ENCODE measurements at regions of chr4 and their contacts with region 1.

Region 1: GRCh38 chr4:38730830-38731646 is 51.8 kb downstream of the TLR10 start:
- DNase-seq: peak; percentile 71 to 81 (median 76)
- H3K4me3 ChIP-seq: no peak overlapping the region
- H3K27ac ChIP-seq: no peak overlapping the region
- H3K4me1 ChIP-seq: peaks cover 0 to 8% (median 0%) of the 10 kb centered on the region in 4 experiments
- H3K27me3 ChIP-seq: no peaks in the 10 kb centered on the region

Region 2: GRCh38 chr4:38062088-38062893 is 668.7 kb before region 1 on chr4:
- CTCF ChIA-PET with region 1: interaction called, 47 read pairs
- POLR2A ChIA-PET with region 1: no interaction called
- DNase-seq: peak; percentile 67 to 78 (median 71)
- H3K4me3 ChIP-seq: peak overlapping the region in 5 of 7 experiments; percentile 15 to 75 (median 47)
- H3K27ac ChIP-seq: no peak overlapping the region
- H3K4me1 ChIP-seq: peaks cover 0 to 4% (median 0%) of the 10 kb centered on the region in 4 experiments
- H3K27me3 ChIP-seq: no peaks in the 10 kb centered on the region

Region 3: GRCh38 chr4:38641811-38642210 is 89.2 kb before region 1 on chr4:
- CTCF ChIA-PET with region 1: no interaction called
- POLR2A ChIA-PET with region 1: no interaction called
- DNase-seq: no peak
- H3K4me3 ChIP-seq: no peak overlapping the region
- H3K27ac ChIP-seq: no peak overlapping the region
- H3K4me1 ChIP-seq: peaks cover 0 to under 1% (median 0%) of the 10 kb centered on the region in 4 experiments
- H3K27me3 ChIP-seq: no peaks in the 10 kb centered on the region

Region 4: DNA sequence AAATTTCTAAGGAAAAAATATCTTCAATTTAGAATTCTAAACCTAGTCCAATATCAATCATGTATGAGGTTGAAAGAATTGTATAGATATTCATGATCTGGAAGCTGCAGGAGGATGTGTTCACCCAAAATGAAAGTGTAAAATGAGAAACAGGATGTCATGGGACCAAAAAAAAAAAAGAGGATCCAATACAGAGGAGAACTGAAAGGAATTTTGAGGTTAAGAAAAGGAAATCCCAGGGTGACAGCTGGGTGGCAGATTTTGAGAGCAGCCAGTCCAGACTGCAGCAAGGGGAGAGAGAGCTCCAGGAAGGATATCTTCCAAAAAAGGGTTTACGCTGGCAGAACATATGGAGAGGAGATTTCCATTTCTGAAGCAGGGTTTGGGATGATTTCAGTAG is 12.8 kb after region 1 on chr4:
- CTCF ChIA-PET with region 1: interaction called, 33 read pairs
- POLR2A ChIA-PET with region 1: interaction called, 3 read pairs
- DNase-seq: peak in 2 of 3 donors; percentile 50 to 59
- H3K4me3 ChIP-seq: peak overlapping the region in 4 of 7 experiments; percentile 5 to 52 (median 30)
- H3K27ac ChIP-seq: no peak overlapping the region
- H3K4me1 ChIP-seq: peaks cover 3 to 12% (median 12%) of the 10 kb centered on the region in 4 experiments
- H3K27me3 ChIP-seq: no peaks in the 10 kb centered on the region

Measured in common myeloid progenitor, CD34-positive (primary cell).